AG04450 (cell line): ENCODE measurements at regions of chr1 and their contacts with region 1.

Region 1: DNA sequence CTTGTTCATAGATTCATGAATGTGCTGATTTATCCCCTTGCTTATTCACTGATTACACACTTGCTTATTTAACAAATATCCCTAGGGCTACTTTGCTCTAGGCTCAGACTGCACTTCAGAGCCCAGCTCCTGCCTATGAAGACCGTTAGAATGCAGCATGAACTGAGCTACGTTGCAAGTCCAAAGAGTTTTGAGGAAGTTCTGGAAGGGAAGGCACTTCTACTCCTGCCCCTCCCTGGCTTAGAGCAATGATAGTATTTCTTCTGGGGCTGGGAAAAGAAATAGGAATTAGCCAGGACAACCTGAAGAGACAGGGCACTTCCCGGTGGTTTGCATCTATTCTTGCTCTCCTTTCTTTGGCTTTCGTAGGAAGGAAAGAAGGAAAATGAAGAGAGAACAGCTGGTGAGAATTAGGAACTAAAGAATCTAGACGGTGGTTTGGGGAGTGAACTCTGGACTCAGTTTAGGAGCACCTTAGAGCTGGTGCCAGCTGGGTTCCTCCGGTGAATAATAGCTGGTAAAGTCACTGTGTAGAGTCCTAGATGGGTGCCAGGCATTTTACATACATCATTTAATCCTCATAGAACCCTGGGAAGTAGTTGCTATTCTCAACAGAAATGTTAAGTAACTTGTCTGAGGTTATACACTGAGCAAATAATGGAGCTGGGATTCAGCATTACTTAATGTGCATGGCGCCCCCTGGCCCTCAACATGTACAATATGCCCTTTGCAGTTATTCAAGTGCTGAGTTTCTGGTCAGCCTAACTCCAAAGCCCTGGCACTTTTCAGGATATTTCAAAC is 65.9 kb downstream of the NDUFS5 start:
- DNase-seq: no peak
- H3K4me3 ChIP-seq: no peak overlapping the region
- H3K27ac ChIP-seq: no peak overlapping the region
- H3K27me3 ChIP-seq: no peaks in the 10 kb centered on the region
- CTCF ChIP-seq: peak; percentile 89

Region 2: DNA sequence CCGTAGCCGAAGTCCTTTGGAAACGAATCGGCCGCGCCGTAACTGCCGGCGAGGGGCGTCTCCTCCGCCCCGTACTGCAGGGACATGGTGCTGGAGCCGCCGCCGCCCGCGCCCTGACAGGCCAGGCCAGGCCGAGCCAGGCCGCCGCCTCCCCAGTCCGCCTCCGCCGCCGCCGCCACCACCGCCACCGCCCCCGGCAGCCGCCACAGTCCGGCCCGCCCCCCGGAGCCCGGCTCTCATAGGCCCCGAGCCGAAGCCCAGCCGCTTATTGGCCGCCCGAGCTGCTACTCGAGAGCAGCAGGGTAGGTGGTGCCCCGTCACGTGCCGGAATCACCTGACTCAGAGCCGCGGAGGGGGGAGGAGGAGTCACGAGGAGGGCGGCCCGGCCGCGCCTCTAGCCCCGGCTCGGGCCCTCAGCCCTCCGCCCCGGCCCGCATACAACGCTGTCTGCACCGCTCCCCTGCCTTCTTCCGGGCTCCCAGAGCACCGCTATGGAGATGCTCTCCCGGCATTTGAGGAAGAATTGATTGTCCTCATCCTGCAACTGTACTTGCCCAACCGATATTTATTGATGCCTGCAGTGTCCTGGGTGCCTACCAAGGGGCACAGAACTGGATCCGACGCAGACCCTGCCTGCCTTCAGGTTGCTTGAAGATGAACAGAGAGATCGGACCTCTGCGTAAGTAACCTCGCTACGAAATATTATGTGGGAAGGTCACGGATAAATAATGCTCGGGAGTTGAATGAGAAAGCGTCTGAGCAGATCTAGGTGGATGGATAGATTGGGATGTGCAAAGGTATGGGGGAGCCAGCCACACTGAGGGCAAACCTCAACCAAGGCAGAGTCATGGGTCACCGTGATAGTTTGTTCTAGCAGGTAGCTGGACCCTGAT is 232.2 kb before region 1 on chr1 and contains the start of gene RRAGC:
- CTCF ChIA-PET with region 1: interaction called, 11 read pairs
- POLR2A ChIA-PET with region 1: no interaction called
- DNase-seq: peak; percentile 95
- H3K4me3 ChIP-seq: peak within 1 kb of the TSS; percentile 100
- H3K27ac ChIP-seq: peak within 1 kb of the TSS; percentile 43
- H3K27me3 ChIP-seq: no peaks in the 10 kb centered on the region
- CTCF ChIP-seq: no peak
- polyA plus RNA-seq, gene RRAGC: 23.3 and 24.9 TPM in 2 replicates

Region 3: GRCh38 chr1:38881487-38881886 is 210.6 kb before region 1 on chr1 and contains the start of gene GJA9:
- CTCF ChIA-PET with region 1: interaction called, 10 read pairs
- POLR2A ChIA-PET with region 1: no interaction called
- DNase-seq: no peak
- H3K4me3 ChIP-seq: no peak within 1 kb of the TSS
- H3K27ac ChIP-seq: no peak within 1 kb of the TSS
- H3K27me3 ChIP-seq: no peaks in the 10 kb centered on the region
- CTCF ChIP-seq: no peak
- polyA plus RNA-seq, gene GJA9: not detected in 2 replicates

Region 4: DNA sequence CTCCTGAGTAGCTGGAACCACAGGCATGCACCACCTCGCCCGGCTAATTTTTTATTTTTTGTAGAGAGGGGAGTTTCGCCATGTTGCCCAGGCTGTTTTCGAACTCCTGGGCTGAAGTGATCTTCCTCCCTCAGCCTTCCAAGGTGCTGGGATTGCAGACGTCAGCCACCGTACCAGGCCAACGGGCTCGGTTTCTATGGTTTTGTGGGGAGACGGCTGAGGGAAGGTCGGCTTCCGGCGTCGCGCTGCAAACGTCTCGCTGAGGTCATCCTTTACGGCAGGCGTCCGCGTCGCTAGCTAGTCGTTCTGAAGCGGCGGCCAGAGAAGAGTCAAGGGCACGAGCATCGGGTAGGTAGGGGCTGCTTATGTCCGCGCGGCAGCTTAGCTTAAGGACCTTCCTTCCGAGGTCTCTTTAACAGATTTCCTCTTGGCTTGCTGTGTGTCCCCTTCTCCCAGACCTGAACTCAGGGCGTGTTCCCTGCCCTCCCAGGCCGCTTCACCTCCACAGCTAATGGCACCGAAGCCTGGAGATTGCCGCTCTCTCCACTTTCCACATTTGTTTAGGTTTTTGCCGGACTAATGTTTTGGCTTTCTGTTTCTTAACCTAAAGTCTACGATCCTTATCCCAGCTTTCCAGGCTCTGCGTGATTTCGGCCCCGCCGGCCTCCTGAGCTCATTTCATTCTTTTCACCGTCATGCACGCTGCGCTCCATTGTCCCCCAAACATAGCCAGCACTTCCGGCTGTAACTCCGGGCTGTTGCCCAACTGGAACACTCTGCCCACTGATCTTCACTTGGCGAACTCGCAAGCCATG is 65.8 kb before region 1 on chr1 and contains the start of gene NDUFS5:
- CTCF ChIA-PET with region 1: interaction called, 17 read pairs
- POLR2A ChIA-PET with region 1: interaction called, 12 read pairs
- DNase-seq: peak; percentile 77
- H3K4me3 ChIP-seq: peak within 1 kb of the TSS; percentile 98
- H3K27ac ChIP-seq: peak within 1 kb of the TSS; percentile 99
- H3K27me3 ChIP-seq: no peaks in the 10 kb centered on the region
- CTCF ChIP-seq: no peak
- polyA plus RNA-seq, gene NDUFS5: 696 and 852 TPM in 2 replicates

Region 5: DNA sequence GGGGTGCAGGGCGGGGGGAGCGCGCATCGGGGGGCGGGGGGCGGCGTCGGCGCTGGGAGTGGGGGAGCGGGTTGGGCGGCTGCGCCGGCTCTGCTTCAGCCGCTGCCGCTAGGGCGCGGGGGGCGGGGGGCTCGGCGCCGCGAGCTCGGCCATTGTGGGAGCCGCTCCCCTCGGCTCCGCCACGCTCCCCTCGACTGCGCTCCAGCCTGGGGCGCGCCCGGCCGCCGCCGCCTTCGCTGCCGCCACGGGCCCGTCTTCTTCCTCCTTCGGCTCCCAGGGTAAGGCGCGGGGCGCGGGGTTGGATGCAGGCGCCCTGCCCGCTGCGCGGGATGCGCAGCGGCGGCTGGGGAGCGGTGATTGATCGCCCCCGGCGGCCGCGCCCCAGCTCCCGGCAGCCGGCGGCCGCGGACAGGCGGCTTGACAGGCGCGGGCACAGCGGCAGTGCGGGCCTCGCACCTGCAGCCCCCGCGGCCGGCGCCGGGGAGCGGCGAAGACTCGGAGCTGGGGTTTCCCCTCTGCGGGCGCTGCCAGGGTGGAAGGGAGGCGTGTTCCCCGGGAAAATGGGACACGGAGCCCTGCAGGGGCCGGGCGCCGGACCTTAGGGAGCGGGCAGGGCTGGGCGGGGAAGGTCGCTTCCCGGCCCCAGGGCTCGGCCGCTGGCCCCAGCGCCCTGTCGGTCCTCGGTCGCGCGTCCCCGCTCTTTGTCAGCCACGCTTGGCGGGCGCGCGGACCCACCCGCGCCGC is 10.6 kb before region 1 on chr1:
- CTCF ChIA-PET with region 1: interaction called, 12 read pairs
- POLR2A ChIA-PET with region 1: interaction called, 3 read pairs
- DNase-seq: no peak
- H3K4me3 ChIP-seq: peak overlapping the region; percentile 54
- H3K27ac ChIP-seq: no peak overlapping the region
- H3K27me3 ChIP-seq: peaks cover 5% of the 10 kb centered on the region
- CTCF ChIP-seq: no peak